Activated CD4-positive, alpha-beta memory T cell treated with anti-CD3 and anti-CD28 coated beads, Interleukin-2, amount 10 ng/mL, durations not matched to agents 7 days and 5 days (primary cell): ENCODE measurements at regions of chr2 and their contacts with region 1.

Region 1: GRCh38 chr2:44087714-44088092 is 81.0 kb upstream of the PPM1B start:
- DNase-seq: no peak
- H3K4me3 Mint-ChIP-seq: peak overlapping the region; percentile 63
- H3K27ac Mint-ChIP-seq: peak overlapping the region; percentile 70
- H3K4me1 Mint-ChIP-seq: peaks cover 27% of the 10 kb centered on the region
- H3K27me3 Mint-ChIP-seq: no peaks in the 10 kb centered on the region

Region 2: GRCh38 chr2:44244129-44244871 is 156.6 kb after region 1 on chr2:
- CTCF ChIA-PET with region 1: interaction called, 10 read pairs
- POLR2A ChIA-PET with region 1: no interaction called
- DNase-seq: peak; percentile 53
- H3K4me3 Mint-ChIP-seq: no peak overlapping the region
- H3K27ac Mint-ChIP-seq: no peak overlapping the region
- H3K4me1 Mint-ChIP-seq: peaks cover 24% of the 10 kb centered on the region
- H3K27me3 Mint-ChIP-seq: peaks cover 2% of the 10 kb centered on the region